AG04449 (cell line): ENCODE measurements at regions of chr10 and their contacts with region 1.

Region 1: DNA sequence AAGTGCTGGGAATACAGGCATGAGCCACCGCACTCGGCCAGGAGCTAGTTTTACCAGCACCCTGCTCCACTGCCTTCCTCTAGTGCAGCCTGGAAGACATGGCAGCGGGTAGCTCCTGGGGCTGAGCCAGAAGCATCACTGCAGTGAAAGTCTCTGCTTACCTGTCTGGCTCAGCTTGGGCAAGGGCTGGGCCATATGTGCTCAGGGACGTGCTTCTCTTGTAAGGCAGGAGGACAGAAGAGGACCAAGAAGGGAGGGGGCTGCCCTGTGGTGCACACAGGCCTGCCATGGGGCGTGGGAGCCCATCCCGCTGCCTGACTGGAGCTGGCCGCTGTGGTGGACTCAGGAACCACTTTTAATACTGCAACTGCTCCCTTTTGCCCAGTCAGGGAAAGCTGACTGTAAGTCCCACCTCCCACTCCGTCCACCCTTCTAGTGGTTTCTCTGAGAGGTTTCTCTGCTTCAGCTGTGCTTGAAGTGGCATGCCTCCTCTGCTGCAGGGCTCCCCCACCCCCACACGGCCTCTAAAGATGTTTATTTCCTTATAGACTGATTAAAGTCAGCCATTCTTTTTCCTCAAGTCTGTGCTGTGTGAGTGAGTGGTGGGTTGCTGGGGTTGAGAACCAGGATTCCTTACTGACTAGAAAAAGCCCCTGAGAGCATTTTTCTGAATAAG is 25.3 kb upstream of the C10orf95 start:
- DNase-seq: no peak
- H3K4me3 ChIP-seq: no peak overlapping the region
- CTCF ChIP-seq: no peak

Region 2: GRCh38 chr10:102399217-102400089 is 77.2 kb before region 1 on chr10:
- CTCF ChIA-PET with region 1: interaction called, 36 read pairs
- POLR2A ChIA-PET with region 1: no interaction called
- DNase-seq: no peak
- H3K4me3 ChIP-seq: peak overlapping the region; percentile 59
- CTCF ChIP-seq: peak; percentile 97

Region 3: GRCh38 chr10:102461187-102462054 is 15.2 kb before region 1 on chr10:
- CTCF ChIA-PET with region 1: interaction called, 101 read pairs
- POLR2A ChIA-PET with region 1: interaction called, 3 read pairs
- DNase-seq: peak; percentile 4
- H3K4me3 ChIP-seq: peak overlapping the region; percentile 62
- CTCF ChIP-seq: no peak

Region 4: DNA sequence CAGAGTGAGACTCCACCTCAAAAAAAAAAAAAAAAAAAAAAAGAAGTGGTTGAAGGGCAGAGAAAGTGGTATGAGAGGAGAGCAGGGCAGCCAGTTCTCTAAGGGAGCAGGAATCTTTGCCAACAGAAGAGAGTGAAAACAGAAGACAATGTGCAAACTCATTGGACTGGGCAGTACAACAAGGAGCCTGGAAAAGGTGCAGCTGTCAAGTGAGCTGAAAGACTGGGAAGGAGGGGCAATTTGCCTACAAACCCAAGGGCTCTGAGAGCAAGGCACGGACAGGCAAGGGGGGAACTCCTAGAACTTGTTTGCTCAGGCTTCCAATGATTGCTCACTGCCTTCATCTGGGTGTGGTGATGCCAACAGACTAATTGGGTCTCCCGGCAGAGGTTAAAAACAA is 16.4 kb after region 1 on chr10:
- CTCF ChIA-PET with region 1: interaction called, 15 read pairs
- POLR2A ChIA-PET with region 1: no interaction called
- DNase-seq: no peak
- H3K4me3 ChIP-seq: no peak overlapping the region
- CTCF ChIP-seq: no peak

Region 5: DNA sequence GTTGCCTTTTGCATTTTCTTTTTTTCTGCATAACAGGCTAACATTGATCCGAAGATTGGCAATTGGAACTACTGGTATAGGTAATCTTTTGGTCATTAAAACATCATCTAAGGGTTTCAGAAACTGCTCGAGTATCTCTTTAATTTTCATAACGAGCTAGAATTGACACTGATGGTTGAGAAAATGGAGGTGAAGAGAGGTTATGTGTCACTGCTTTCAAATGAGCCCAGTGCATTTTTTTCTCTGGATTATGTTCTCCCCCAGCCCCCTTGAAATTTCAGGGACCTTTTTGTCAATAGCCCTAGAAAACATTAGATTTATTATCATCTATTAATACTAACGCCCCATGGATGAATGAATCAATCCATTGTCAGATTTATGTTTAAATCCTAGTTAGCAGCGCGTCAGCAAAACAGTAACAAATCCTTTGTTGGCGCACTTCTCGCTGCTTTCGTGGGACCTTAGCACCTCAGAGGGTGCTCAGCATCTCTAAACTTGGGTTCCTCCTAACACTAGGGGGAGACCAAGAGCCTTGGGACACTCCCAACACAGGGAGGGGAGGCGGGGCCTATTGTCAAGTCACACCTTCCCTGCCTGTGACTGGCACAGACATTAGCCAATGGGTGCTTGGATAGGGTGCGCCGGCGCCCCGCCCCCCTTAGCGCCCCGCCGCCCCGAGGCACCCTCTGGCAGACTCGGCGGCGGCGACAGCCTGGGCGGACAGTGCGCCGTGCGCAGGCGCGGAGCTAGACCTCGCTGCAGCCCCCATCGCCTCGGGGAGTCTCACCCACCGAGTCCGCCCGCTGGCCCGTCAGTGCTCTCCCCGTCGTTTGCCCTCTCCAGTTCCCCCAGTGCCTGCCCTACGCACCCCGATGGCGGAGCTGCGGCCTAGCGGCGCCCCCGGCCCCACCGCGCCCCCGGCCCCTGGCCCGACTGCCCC is 26.9 kb after region 1 on chr10 and contains the start of gene SUFU:
- CTCF ChIA-PET with region 1: interaction called, 11 read pairs
- POLR2A ChIA-PET with region 1: no interaction called
- DNase-seq: peak; percentile 90
- H3K4me3 ChIP-seq: peak within 1 kb of the TSS; percentile 96
- CTCF ChIP-seq: peak; percentile 86

Region 6: GRCh38 chr10:102596506-102596971 is 119.9 kb after region 1 on chr10:
- CTCF ChIA-PET with region 1: interaction called, 10 read pairs
- POLR2A ChIA-PET with region 1: no interaction called
- DNase-seq: no peak
- H3K4me3 ChIP-seq: no peak overlapping the region
- CTCF ChIP-seq: peak; percentile 74